Mammary epithelial cell (primary cell): ENCODE measurements at regions of chr3 and their contacts with region 1.

Region 1: DNA sequence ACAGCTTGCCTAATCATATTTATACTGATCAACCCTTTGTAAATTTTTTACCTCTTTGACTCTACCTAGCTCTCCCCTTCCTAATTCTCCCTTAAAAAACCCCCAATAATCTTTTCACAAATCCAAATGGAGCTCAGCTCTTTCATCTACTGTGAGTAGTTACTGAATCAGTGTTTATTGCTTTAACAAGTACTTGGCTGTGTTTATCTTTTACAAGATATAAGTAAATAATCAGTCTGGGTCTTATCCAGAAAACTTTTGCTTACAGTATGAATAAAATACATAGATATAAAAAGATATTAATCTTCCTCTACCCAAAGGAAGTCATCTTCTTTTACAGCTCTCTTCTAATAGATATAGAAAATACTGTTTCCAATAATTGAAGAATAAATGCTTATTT is 366.4 kb downstream of the RAP2B start:
- DNase-seq: no peak
- H3K4me3 ChIP-seq: no peak overlapping the region
- H3K27ac ChIP-seq: no peak overlapping the region
- H3K4me1 ChIP-seq: no peaks in the 10 kb centered on the region
- H3K27me3 ChIP-seq: no peaks in the 10 kb centered on the region
- CTCF ChIP-seq: no peak

Region 2: GRCh38 chr3:152629363-152630122 is 898.9 kb before region 1 on chr3:
- CTCF ChIA-PET with region 1: interaction called, 14 read pairs
- dilution Hi-C with region 1: no loop called
- in situ Hi-C with region 1: no loop called
- intact Hi-C with region 1: no loop called
- DNase-seq: no peak
- H3K4me3 ChIP-seq: no peak overlapping the region
- H3K27ac ChIP-seq: no peak overlapping the region
- H3K4me1 ChIP-seq: no peaks in the 10 kb centered on the region
- H3K27me3 ChIP-seq: no peaks in the 10 kb centered on the region
- CTCF ChIP-seq: no peak

Region 3: GRCh38 chr3:152977366-152977765 is 551.1 kb before region 1 on chr3:
- CTCF ChIA-PET with region 1: no interaction called
- dilution Hi-C with region 1: no loop called
- in situ Hi-C with region 1: no loop called
- intact Hi-C with region 1: no loop called
- DNase-seq: no peak
- H3K4me3 ChIP-seq: no peak overlapping the region
- H3K27ac ChIP-seq: no peak overlapping the region
- H3K4me1 ChIP-seq: no peaks in the 10 kb centered on the region
- H3K27me3 ChIP-seq: peaks cover 3% of the 10 kb centered on the region
- CTCF ChIP-seq: no peak